Left ventricle myocardium superior (tissue), 1 donor: ENCODE measurements at regions of chr20 and their contacts with region 1.

Region 1: DNA sequence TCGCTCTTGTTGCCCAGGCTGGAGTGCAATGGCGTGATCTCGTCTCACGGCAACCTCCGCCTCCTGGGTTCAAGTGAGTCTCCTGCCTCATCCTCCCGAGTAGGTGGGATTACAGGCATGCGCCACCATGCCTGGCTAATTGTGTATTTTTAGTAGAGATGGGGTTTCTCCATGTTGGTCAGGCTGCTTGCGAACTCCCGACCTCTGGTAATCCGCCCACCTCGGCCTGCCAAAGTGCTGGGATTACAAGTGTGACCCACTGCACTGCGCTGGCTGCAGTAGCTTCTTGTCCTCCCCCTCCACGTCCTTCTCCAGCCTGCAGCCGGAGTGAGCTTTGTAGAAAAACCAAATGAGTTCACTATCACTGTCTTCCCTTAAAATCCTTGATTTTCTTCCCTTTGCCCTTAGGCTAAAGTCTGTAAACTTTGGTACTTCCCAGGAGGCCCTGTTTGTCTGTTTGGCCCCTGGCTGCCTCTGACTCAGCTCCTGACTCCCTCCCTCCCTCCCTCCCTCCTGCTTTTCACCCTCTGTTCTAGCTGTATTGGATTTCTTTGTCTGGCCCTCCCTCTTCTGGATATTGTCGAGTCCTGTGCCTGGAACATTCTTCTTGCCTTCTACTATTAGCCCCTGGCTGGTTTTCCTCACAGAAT is 12.9 kb downstream of the PARD6B start:
- DNase-seq: peak; percentile 68
- ATAC-seq: peak; percentile 90

Region 2: DNA sequence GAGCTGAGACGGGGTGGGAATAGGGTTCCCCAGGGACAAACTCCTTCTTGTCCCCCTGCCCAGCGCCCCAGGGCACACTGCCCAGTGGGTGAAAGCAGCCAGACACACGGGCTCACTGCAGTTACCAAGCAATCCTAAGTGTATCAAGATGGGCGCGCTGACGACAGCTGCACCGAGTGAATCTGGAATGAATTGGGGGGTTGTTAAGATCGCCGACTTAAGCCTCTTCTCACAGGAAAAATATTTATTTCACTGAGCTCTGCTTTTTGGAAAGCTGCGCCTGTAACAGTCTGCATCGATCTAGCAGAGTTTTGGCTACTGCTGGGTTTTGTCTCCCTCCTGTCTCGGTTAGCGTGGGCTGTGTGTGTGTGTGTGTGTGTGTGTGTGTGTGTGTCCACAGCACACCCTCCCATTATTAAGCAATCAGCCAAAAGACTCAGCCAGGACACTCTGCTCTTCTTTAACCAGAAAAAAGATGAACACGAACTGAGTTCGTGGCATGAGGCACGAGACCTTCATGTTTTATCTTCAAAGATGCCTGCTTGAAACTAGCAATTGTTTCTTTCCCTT is 88.9 kb before region 1 on chr20:
- intact Hi-C with region 1: loop called (anchors 10 kb)
- DNase-seq: peak; percentile 82
- ATAC-seq: peak; percentile 82